Mammary epithelial cell (primary cell): ENCODE measurements at regions of chr10 and their contacts with region 1.

Region 1: DNA sequence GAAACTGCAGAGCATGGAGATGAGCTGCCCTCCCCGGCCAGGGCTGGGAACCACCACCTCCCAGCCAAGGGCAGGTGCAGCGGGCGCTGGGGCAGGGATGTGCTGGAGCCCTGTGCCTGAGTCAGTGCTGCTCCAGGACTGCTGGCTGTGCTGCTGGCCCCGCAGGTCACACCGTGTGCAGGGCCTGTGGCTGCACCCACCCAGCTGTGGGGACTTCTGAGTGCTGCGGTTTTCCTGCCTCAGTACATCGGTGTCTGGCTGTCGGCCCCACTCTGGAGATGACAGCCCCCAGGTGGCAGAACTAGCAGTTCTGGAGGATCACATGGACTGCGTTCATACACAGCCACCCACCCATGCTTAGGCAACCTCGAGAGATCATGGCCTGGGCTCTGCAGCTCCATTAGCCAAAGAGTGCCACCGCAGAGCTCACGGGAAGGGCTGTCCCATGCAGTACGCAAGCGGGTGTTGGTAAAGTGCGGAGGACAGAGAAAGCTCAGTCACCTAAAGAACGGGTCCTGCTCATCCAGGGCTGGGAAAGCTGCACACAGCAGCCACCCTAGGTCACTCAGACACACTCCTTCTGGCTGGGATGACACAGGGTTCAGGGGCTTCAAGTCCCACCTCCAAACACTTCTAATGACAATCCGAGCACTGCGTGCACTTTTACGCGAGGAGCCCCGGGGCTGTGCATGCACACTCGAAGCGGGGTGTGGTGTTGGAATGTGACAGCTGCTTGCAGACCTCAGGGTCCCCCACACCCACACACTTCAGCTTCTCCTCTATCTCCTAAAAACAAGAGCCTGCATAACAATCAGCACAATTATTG is 198.1 kb upstream of the PPP2R2D start:
- DNase-seq: no peak
- H3K4me3 ChIP-seq: no peak overlapping the region
- H3K27ac ChIP-seq: no peak overlapping the region
- H3K4me1 ChIP-seq: no peaks in the 10 kb centered on the region
- H3K27me3 ChIP-seq: no peaks in the 10 kb centered on the region
- CTCF ChIP-seq: no peak

Region 2: DNA sequence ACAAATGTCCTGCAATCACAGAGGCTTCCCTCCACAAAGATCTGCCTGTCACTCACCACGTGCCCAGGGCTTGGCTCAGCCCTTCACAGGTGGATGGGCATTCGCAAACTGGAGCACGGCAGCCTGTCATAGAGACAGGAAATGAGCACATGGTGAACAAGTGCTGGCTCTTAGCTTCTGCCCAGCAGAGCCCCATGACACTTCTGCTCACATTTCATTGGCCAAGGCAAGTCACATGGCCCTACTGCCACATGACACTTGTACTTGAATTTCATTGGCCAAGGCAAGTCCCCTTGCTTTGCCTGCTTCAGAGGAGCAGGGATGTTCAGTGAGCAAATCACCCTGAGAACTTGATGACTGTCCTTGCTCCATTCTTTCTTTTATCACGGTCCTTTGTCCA is 87.3 kb after region 1 on chr10:
- CTCF ChIA-PET with region 1: no interaction called
- dilution Hi-C with region 1: no loop called
- in situ Hi-C with region 1: no loop called
- intact Hi-C with region 1: no loop called
- DNase-seq: no peak
- H3K4me3 ChIP-seq: no peak overlapping the region
- H3K27ac ChIP-seq: no peak overlapping the region
- H3K4me1 ChIP-seq: no peaks in the 10 kb centered on the region
- H3K27me3 ChIP-seq: no peaks in the 10 kb centered on the region
- CTCF ChIP-seq: no peak

Region 3: DNA sequence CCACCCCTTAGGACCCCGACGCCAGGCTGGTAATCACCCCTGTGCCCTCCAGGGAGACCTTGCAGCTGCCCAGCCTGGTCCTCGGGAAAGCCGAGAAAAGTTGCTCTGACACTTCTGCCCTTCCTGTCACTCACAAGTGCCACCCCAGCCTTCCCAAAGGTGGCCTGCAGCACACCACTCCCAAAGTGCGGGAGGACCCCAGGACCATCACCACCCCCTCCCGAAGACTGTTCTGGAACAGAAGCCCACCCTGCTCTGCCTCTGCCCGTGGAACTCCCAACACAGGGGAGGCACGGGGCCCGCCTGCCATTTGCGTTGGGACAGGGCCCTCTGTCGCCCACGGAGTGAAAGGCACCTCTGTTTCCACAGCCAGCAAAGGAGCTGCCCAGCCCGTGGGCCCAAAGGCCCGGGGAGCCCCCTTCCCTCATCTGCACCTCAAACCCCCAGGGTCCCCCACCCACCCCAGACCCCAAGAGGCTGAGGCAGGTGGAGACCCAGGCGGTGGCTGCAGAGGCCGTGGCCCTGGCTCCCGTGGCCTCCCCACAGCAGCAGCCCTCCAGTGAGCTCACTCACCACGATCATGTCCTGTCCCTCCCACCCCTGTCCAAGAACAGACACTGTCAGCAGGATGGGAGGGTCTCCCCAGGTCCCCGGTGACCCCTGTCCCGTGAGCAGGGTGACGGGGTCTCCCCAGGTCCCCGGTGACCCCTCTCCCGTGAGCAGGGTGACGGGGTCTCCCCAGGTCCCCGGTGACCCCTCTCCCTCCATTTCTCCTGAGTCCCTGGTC is 150.3 kb after region 1 on chr10:
- CTCF ChIA-PET with region 1: no interaction called
- dilution Hi-C with region 1: loop called (anchors 10 kb)
- in situ Hi-C with region 1: no loop called
- intact Hi-C with region 1: no loop called
- DNase-seq: no peak
- H3K4me3 ChIP-seq: no peak overlapping the region
- H3K27ac ChIP-seq: no peak overlapping the region
- H3K4me1 ChIP-seq: no peaks in the 10 kb centered on the region
- H3K27me3 ChIP-seq: no peaks in the 10 kb centered on the region
- CTCF ChIP-seq: no peak